PC-9 (cell line): ENCODE measurements at regions of chr3 and their contacts with region 1.

Region 1: DNA sequence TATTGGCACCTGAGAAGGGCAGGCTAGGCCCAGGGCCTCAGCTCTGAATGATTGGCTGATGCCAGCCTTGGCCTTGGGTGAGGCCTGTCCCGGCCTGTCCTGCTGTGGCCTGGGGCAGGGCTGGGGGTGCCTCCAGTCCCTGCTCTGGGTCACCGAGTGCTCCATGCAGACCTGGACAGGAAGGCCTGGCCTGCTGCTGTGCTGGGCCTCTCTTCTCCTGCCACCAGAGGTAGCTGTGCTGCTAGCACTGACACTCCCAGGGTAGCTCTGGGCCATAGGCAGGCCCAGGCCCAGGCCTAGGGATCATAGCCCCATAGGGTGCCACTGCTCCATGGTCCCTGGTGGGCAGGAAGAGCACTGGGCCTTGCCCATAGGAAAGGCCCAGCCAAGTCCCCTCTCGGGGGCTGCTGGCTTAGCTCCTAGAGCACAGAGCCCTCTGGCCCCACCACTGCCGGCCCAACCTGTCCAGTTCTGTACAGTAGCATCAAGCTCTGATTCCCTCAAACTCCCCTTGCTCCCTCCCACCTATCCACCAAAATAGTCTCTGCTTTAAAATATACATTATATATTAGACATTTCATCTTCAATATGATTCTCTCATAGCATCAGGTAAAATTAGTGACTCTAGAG is 18.2 kb downstream of the ABTB1 start:
- DNase-seq: peak; percentile 41 to 70
- H3K4me3 ChIP-seq: no peak overlapping the region
- H3K27ac ChIP-seq: peak overlapping the region; percentile 94
- H3K4me1 ChIP-seq: peaks cover 23% of the 10 kb centered on the region
- H3K27me3 ChIP-seq: no peaks in the 10 kb centered on the region
- CTCF ChIP-seq: peak; percentile 67

Region 2: DNA sequence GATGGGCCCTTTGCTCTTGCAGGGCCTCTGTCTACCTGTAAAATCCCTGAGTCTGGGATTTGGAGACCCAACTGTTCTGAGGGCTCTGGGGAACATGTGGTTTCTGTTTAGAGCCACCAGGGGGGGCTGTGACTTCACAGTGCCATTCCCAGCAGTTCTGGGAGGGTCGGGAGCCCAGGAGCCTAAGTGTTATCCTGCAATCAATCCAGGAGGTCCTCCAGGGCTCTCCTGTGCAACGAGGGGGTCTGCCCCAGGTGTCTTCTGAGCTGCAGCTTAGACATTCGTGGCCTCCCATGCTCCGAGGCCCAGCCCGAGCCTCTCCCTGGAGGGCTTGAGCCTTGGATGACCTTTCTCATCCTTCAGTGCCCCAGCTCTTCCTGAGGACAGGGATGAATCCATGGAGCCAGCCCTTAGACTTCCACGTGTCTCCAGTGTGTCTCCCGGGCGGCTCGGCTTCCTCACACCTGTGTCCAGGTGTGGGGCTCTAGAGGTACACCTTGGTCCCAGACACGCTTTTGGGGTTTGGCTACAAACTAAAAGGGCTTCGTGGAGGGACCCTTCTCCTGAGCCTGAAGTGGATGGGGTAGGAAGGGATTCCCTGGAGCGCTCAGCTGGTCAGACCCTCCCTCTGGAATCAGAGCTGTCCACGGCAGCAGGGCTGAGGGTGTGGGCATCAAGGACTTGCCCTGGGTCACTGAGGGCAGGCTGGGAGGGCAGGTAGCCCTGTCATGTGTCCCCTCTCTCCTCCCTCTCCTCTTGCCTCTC is 38.5 kb before region 1 on chr3:
- CTCF ChIA-PET with region 1: interaction called, 3 read pairs
- POLR2A ChIA-PET with region 1: no interaction called
- intact Hi-C with region 1: loop called (anchors 1 kb)
- DNase-seq: peak in 1 of 2 experiments; percentile 57
- H3K4me3 ChIP-seq: no peak overlapping the region
- H3K27ac ChIP-seq: no peak overlapping the region
- H3K4me1 ChIP-seq: peaks cover 26% of the 10 kb centered on the region
- H3K27me3 ChIP-seq: no peaks in the 10 kb centered on the region
- CTCF ChIP-seq: peak; percentile 92

Region 3: DNA sequence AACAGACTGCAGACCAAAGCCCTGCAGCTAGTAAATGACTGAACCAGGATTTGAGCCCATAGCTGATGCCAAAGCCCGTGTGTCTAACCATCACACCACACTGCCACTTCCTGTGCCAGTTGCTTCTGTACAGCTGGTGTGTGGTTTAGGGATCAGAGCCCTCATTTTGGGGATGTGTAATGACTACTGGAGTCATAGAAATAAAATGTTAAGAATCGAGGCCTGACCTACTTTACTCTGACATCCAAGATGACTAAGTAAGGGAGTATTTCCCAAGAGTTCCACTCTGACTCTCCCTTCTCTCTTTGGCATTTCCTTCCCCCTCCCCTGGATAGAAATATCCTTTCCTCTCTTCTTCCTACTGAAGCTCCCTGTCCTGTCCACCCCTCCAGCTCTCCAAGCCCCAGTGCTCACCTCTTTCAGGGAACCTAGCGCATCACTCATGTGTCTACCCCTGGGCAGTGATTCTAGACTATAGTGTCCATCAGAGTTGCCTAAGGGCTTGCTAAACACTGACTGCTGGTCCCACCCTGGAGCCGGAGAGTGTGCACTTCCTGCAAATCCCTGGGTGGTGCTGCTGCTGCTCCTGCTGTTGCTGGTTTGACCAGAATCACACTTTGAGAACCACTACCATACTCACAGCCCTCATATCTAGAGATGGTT is 77.5 kb after region 1 on chr3:
- CTCF ChIA-PET with region 1: interaction called, 7 read pairs
- POLR2A ChIA-PET with region 1: no interaction called
- intact Hi-C with region 1: loop called (anchors 1 kb)
- DNase-seq: peak; percentile 65 to 92
- H3K4me3 ChIP-seq: no peak overlapping the region
- H3K27ac ChIP-seq: peak overlapping the region; percentile 71
- H3K4me1 ChIP-seq: peaks cover 36% of the 10 kb centered on the region
- H3K27me3 ChIP-seq: no peaks in the 10 kb centered on the region
- CTCF ChIP-seq: no peak

Region 4: GRCh38 chr3:127953091-127954035 is 262.4 kb after region 1 on chr3:
- CTCF ChIA-PET with region 1: interaction called, 12 read pairs
- POLR2A ChIA-PET with region 1: no interaction called
- intact Hi-C with region 1: no loop called
- DNase-seq: peak in 1 of 2 experiments; percentile 47
- H3K4me3 ChIP-seq: no peak overlapping the region
- H3K27ac ChIP-seq: no peak overlapping the region
- H3K4me1 ChIP-seq: peaks cover 6% of the 10 kb centered on the region
- H3K27me3 ChIP-seq: no peaks in the 10 kb centered on the region
- CTCF ChIP-seq: no peak

Region 5: DNA sequence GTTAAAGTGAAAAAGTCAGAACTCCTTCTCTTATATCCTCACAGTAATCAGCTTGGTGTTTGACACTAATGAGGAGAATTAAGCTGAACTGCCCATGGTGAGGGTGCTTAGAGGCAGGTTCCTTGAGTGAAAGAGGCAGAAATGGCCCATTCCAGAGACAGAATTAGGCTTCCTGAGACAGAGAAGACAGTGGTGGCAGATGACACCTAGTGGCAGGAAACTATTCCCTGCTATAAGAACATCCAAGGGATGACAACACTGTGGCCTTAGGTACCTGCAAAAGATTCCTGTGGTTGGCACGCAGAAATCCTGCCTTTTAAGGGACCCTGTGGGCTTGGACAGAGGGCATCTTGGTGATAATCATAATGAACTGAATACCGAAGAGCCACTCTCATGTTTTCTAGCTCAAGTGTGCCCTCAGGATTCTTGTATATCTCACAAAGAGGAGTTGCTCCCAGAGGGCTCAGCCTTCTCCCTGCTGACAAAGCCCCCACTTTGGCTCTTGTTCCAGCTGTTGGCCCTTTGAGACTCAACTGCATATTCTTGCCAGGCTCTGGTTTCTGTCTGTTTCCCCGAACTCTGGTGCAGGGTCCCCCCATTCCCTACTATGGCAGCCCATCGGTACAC is 280.1 kb after region 1 on chr3:
- CTCF ChIA-PET with region 1: no interaction called
- POLR2A ChIA-PET with region 1: no interaction called
- intact Hi-C with region 1: loop called (anchors 2 kb)
- DNase-seq: peak; percentile 56 to 59
- H3K4me3 ChIP-seq: no peak overlapping the region
- H3K27ac ChIP-seq: no peak overlapping the region
- H3K4me1 ChIP-seq: no peaks in the 10 kb centered on the region
- H3K27me3 ChIP-seq: no peaks in the 10 kb centered on the region
- CTCF ChIP-seq: peak; percentile 81